ENCODE measurements at regions of chr6 and their contacts with region 1.

Region 1: DNA sequence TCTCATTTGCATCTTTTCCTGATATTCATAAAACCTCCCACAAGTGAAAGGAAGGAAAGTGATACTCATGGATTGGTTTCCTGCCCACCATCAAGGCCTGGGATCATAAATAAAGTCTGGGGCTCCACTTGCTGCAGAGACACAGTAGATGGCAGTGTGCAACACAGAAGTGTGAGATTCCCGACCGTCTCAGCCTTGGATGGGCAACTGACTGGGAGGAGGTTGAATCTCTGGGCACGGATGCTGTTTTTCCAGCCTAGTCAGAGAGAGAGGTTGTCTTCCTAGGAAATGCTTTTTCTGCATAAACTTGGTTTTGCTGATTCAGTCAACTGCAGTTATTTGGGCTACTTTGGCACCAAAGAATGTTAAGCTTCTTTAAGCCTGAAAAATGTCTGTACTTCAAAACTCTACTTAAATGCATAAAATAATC is 9.9 kb upstream of the RFPL4B start:
- DNase-seq: peak; percentile 83
- ATAC-seq: peak; percentile 91
- H3K4me3 ChIP-seq: no peak overlapping the region
- H3K27ac ChIP-seq: no peak overlapping the region
- H3K4me1 ChIP-seq: peaks cover 4% of the 10 kb centered on the region
- H3K27me3 ChIP-seq: no peaks in the 10 kb centered on the region
- CTCF ChIP-seq: peak; percentile 78
- POLR2A ChIP-seq: no peak
- RAD21 ChIP-seq: peak; percentile 80

Region 2: GRCh38 chr6:112466373-112467151 is 129.3 kb after region 1 on chr6:
- CTCF ChIA-PET with region 1: no interaction called
- POLR2A ChIA-PET with region 1: no interaction called
- dilution Hi-C with region 1: no loop called
- in situ Hi-C with region 1: no loop called
- intact Hi-C with region 1: no loop called
- DNase-seq: peak; percentile 69
- ATAC-seq: peak; percentile 80
- H3K4me3 ChIP-seq: no peak overlapping the region
- H3K27ac ChIP-seq: peak overlapping the region; percentile 58; the same call in 1 of the 2 replicates
- H3K4me1 ChIP-seq: peaks cover 10% of the 10 kb centered on the region
- H3K27me3 ChIP-seq: no peaks in the 10 kb centered on the region
- CTCF ChIP-seq: no peak
- POLR2A ChIP-seq: no peak
- RAD21 ChIP-seq: no peak

Region 3: GRCh38 chr6:113381959-113382358 is 1044.7 kb after region 1 on chr6:
- CTCF ChIA-PET with region 1: no interaction called
- POLR2A ChIA-PET with region 1: no interaction called
- dilution Hi-C with region 1: no loop called
- in situ Hi-C with region 1: no loop called
- intact Hi-C with region 1: loop called (anchors 10 kb)
- DNase-seq: peak; percentile 75
- ATAC-seq: no peak
- H3K4me3 ChIP-seq: no peak overlapping the region
- H3K27ac ChIP-seq: no peak overlapping the region; the same call in 1 of the 2 replicates
- H3K4me1 ChIP-seq: peaks cover 9% of the 10 kb centered on the region
- H3K27me3 ChIP-seq: no peaks in the 10 kb centered on the region
- CTCF ChIP-seq: no peak
- POLR2A ChIP-seq: no peak
- RAD21 ChIP-seq: no peak